Breast epithelium (tissue), 4 donors: ENCODE measurements at regions of chr3 and their contacts with region 1.

Region 1: DNA sequence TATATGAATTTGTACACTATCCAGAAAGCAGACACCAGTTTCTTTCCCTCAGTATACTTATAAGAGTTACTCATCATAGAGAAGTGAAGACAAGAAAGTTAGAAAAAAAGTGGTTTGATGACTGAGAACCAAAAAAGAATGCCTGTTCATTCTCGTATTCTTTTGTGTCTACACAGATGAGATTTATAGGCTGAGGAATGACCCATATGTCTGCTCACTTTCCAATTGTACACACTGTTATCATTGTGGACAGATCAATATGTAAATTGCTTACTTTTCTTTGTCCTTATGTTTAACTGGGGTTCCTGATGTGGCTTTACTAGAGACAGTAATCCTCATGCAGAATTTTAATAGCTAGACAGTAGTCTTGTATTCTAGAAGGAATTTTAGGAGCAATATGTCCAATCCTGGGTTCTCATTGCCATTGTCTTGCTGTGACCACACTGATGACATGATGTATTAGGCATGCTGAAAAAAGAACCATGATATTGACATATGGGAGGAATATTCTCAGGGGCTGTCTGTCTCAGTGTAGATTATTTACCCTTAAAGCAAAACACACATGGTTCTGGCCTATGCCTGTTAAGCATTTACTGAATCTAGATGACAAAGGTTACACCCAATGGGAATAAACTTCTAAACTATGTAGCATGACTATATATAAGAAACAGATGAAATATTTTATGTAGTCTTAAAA is 669.7 kb downstream of the ROBO1 start:
- DNase-seq: no peak
- H3K4me3 ChIP-seq: no peak overlapping the region
- H3K27ac ChIP-seq: no peak overlapping the region
- H3K4me1 ChIP-seq: no peaks in the 10 kb centered on the region
- H3K27me3 ChIP-seq: no peaks in the 10 kb centered on the region
- CTCF ChIP-seq: no peak
- POLR2A ChIP-seq: no peak

Region 2: DNA sequence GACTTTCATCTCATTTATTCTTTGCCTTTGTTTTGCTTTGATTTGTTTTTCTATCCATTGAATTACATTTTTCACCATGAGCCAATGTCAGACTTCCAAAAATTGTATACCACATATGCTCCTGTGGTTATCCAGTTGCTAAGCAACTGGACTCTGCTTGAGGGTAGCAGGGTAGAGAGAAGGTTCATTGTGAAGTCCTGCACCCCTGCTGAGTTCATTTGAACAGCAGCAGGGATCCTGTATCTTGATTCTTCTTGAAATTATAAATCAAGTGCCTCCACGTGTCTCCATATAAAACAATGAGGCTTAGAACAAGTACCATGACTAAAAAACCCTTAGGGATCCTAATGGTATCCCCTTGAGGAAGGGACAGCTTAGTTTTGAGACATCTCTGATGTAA is 1608.9 kb before region 1 on chr3:
- intact Hi-C with region 1: no loop called
- DNase-seq: no peak
- H3K4me3 ChIP-seq: no peak overlapping the region
- H3K27ac ChIP-seq: no peak overlapping the region
- H3K4me1 ChIP-seq: no peaks in the 10 kb centered on the region
- H3K27me3 ChIP-seq: no peaks in the 10 kb centered on the region
- CTCF ChIP-seq: no peak
- POLR2A ChIP-seq: no peak

Region 3: DNA sequence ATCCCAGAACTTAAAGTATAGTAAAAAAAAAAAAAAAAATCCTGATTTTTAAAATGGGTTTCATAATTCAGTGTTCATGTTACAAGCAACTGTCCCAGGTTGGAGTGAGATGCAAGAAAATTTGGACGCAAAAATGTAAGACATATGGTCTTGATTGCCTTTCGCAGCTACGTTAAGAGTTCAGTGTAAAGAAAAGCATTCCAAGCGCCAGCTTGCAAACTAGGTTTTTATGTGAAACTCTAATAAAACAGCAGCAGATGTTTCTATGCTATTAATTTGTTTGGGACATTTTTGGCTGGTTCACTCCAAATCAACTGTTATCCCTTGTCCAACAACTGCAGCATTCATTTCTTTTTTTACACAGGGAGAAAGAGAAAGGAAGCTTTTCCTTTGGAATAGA is 288.1 kb before region 1 on chr3:
- intact Hi-C with region 1: loop called (anchors 10 kb)
- DNase-seq: no peak
- H3K4me3 ChIP-seq: no peak overlapping the region
- H3K27ac ChIP-seq: no peak overlapping the region
- H3K4me1 ChIP-seq: no peaks in the 10 kb centered on the region
- H3K27me3 ChIP-seq: no peaks in the 10 kb centered on the region
- CTCF ChIP-seq: no peak
- POLR2A ChIP-seq: no peak